ENCODE measurements at regions of chr4 and their contacts with region 1.

Region 1: GRCh38 chr4:159102622-159103383 is at the start of gene RAPGEF2:
- DNase-seq: peak; percentile 95
- H3K4me3 ChIP-seq: peak within 1 kb of the TSS; percentile 67 to 93 (median 87)
- H3K27ac ChIP-seq: peak within 1 kb of the TSS; percentile 92
- H3K4me1 ChIP-seq: peaks cover 19% of the 10 kb centered on the region
- H3K27me3 ChIP-seq: no peaks in the 10 kb centered on the region
- CTCF ChIP-seq: peak in 1 of 2 donors; percentile 2
- total RNA-seq, gene RAPGEF2: 23.4 to 47.2 TPM

Region 2: DNA sequence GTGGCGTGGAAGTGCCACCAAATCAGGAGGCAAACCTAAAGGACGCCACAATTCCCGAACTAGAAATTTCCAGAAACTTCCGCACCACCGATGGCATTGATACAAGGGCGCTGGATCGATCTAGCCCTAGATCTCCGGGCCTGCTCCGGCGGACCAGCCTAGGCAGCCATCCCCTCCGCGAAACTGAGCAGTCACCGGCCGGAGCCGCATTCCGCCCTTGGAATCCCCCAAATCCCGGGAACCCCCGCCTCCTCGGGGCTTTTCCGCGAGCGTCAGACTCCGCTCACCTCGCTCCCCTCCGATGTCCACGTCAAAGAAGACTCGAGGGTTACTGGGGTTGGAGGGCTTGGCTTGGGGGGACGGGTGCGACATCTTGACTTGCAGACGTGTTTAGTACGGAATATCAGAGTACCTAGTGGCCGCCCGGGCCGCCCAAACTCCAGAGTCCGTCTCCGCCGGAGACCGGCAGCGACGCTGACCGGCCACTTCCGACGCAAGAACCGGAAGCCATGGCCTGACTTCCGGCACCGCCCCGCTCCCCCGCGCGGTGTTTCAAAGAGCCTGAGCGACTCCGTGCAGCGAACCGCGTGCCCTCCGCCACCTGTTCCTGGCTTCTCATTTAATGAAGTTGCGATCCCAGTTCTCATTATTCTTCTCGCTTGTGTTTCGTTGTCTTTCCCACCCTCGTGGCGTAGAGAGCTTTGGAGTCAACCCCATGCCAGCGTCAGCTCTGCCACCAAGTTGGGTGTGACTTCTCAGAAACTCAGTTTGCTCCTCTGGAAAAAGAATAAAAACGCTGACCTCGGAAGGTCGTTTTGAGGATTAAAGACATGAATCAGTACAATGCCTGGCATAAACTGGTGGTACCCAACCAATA is 379.6 kb before region 1 on chr4 and contains the start of gene PPID:
- CTCF ChIA-PET with region 1: no interaction called
- dilution Hi-C with region 1: no loop called
- in situ Hi-C with region 1: no loop called
- intact Hi-C with region 1: loop called (anchors 5 kb)
- DNase-seq: peak; percentile 82
- H3K4me3 ChIP-seq: peak within 1 kb of the TSS; percentile 61 to 80 (median 67)
- H3K27ac ChIP-seq: peak within 1 kb of the TSS; percentile 91
- H3K4me1 ChIP-seq: peaks cover 7% of the 10 kb centered on the region
- H3K27me3 ChIP-seq: no peaks in the 10 kb centered on the region
- CTCF ChIP-seq: no peak
- total RNA-seq, gene PPID: 13.8 to 26.0 TPM

Region 3: GRCh38 chr4:158873795-158874401 is 228.9 kb before region 1 on chr4:
- CTCF ChIA-PET with region 1: no interaction called
- dilution Hi-C with region 1: no loop called
- in situ Hi-C with region 1: no loop called
- intact Hi-C with region 1: loop called (anchors 5 kb)
- DNase-seq: peak; percentile 87
- H3K4me3 ChIP-seq: no peak overlapping the region
- H3K27ac ChIP-seq: no peak overlapping the region
- H3K4me1 ChIP-seq: peaks cover 18% of the 10 kb centered on the region
- H3K27me3 ChIP-seq: no peaks in the 10 kb centered on the region
- CTCF ChIP-seq: no peak

Region 4: DNA sequence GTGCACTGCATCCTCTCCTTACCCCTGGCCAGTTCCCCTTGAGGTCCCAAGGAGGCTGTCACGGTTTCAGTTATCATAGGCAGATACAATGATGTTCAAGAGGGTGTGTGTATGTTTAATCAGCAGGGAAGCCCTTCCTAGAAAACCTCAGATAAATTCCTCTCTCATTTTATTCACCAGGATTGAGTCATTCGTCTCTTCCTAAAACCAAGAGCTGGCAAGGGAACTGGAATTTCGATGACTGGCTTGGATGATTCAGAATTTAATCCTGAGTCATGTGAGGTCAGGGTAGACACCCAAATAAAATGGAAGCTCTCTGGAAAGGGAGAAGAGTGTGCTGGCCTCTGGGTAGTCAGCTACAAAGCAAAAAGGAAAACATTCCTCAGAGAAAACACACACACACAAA is 106.1 kb before region 1 on chr4:
- CTCF ChIA-PET with region 1: no interaction called
- dilution Hi-C with region 1: no loop called
- in situ Hi-C with region 1: loop called in 1 of 2 experiments (anchors 10 kb)
- intact Hi-C with region 1: no loop called
- DNase-seq: peak; percentile 99
- H3K4me3 ChIP-seq: no peak overlapping the region
- H3K27ac ChIP-seq: peak overlapping the region; percentile 82
- H3K4me1 ChIP-seq: peaks cover 22% of the 10 kb centered on the region
- H3K27me3 ChIP-seq: no peaks in the 10 kb centered on the region
- CTCF ChIP-seq: no peak

Region 5: DNA sequence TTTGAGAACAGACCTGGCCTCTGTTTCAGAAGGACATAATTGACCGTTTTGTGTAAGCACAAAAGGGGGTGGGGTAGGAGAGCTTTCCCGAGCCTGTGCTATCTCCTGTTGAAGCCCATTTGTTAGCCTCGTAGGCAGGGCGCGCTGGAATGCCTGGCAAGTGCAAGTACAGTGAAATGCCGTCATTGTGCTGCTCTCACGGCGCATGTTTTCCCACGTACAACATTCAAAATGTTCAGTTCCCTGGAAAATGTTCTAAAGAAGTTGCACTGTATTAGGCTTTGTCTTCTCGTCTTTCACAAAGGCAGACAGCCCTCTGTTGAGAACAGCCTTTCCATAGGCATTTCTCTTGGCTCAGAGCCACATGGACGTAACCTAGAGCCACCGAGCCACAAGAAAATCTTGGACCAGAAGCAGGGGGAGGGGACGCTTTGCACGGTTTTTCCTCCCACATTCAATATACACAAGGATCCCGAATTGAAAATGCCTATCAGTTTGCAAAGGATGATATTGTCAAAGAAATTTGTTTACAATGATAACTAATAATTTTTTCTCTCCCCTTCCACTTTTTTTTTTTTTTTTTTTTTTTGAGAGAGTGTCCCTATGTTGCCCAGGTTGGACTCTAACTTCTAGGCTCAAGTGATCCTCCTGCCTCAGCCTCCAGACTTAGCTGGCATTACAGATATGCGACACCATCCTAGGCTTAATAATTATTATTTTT is 54.5 kb before region 1 on chr4:
- CTCF ChIA-PET with region 1: no interaction called
- dilution Hi-C with region 1: no loop called
- in situ Hi-C with region 1: no loop called
- intact Hi-C with region 1: loop called (anchors 2 kb)
- DNase-seq: peak; percentile 65
- H3K4me3 ChIP-seq: peak overlapping the region in 2 of 3 experiments; percentile 32 to 41
- H3K27ac ChIP-seq: peak overlapping the region; percentile 24
- H3K4me1 ChIP-seq: peaks cover 5% of the 10 kb centered on the region
- H3K27me3 ChIP-seq: no peaks in the 10 kb centered on the region
- CTCF ChIP-seq: no peak

Region 6: GRCh38 chr4:159175085-159175988 is 72.5 kb after region 1 on chr4:
- CTCF ChIA-PET with region 1: no interaction called
- dilution Hi-C with region 1: no loop called
- in situ Hi-C with region 1: no loop called
- intact Hi-C with region 1: loop called (anchors 1 kb)
- DNase-seq: peak; percentile 80
- H3K4me3 ChIP-seq: peak overlapping the region; percentile 8 to 28 (median 24)
- H3K27ac ChIP-seq: peak overlapping the region; percentile 28
- H3K4me1 ChIP-seq: peaks cover 16% of the 10 kb centered on the region
- H3K27me3 ChIP-seq: no peaks in the 10 kb centered on the region
- CTCF ChIP-seq: peak; percentile 60 to 76

Measured in mammary epithelial cell (primary cell).